GM10248 (cell line): ENCODE measurements at regions of chr1 and their contacts with region 1.

Region 1: DNA sequence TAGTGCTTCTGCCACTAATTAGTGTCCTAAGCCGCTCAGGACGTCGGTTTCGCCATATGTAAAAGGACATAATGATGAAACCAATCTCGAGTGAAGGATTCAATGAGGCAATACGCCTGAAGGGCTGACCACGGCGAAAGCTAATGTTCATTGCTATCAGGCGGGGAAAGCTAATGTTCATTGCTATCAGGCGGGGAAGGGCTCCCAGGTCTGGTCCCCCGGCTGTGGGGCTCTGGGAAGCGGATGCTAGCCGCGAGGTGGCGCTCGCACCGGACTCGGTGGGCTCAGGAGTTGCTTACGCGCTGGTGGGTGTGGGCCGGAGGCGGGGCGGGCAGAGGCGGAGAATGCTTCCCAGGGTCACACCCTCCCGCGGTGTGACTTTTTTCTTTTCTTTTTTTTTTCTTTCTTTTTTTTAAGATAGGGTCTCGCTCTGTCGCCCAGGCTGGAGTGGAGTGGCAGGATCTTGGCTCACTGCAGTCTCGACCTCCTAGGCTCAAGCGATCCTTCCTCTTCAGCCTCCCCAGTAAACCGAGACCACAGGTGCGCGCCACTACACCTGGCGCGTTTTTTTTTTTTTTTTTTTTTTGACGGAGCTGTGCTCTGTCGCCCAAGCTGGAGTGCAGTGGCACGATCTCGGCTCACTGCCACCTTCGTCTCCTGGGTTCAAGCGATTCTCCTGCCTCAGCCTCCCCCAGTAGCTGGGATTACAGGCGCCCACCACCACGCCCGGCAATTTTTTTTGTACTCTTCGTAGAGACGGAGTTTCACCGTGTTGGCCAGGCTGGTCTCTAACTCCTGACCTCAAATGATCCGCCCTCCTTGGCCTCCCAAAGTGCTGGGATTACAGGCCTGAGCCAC is 1.1 kb upstream of the PEAR1 start:
- DNase-seq: peak; percentile 89
- CTCF ChIP-seq: peak; percentile 80

Region 2: DNA sequence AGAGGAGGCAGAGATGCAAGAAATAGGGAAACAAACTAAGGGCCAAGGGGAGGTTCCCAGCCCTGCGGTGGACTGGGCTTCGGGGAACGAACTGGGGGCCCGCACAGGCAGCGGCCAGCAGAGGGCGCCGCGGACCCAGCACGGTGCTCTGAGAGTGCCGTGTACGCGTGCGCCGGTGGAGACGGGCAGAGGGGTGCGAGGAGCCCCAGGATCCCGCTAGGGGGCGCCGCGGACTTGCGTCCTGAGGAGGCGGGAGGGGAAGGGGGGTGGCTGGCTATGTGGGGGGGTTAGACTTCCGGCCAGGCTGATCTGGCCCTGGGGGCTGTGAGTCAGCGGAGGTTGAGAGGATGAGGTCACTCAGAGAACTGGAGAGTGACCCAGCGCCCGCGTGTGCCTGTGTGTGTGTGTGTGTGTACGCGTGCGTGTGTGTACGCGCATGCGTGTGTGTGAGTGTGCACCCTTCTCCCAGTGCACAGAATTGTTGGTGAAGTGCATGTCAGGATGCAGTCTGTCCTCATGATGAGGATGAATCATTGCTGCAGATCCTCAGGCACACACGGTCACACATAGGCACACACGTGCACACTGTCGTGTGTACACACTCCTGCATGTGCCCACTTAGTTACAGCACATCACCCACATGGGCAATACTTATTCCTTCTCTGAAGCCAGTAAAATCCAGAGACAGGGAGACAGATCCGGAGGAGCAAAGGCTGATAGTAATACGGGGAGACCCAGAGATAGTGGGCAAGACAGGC is 232.2 kb before region 1 on chr1:
- CTCF ChIA-PET with region 1: interaction called, 33 read pairs
- POLR2A ChIA-PET with region 1: no interaction called
- DNase-seq: peak; percentile 99
- CTCF ChIP-seq: peak; percentile 99

Region 3: GRCh38 chr1:156705918-156706656 is 186.3 kb before region 1 on chr1:
- CTCF ChIA-PET with region 1: interaction called, 15 read pairs
- POLR2A ChIA-PET with region 1: no interaction called
- DNase-seq: peak; percentile 88
- CTCF ChIP-seq: peak; percentile 67

Region 4: DNA sequence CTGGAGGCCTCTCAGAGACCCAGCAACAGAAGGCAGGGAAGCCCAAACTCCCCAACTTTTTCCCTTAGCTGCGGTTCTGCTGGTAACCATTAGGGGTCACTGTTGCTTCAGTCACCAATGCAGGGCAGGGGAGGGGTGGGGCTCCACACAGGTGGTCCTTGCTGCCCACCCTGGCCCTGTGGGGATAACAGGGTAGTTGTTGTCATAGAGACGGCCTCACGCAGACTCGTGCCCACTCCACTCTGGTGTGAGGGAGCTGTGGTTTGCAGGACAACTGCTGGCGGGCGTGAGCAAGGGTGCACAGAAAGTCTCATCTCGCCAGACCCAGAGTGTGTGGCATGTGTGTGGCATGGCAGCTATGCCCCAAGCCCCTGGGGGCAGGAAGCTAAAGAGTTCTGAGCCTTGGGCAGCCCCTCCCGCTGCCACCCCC is 53.4 kb before region 1 on chr1:
- CTCF ChIA-PET with region 1: interaction called, 52 read pairs
- POLR2A ChIA-PET with region 1: no interaction called
- DNase-seq: peak; percentile 75
- CTCF ChIP-seq: peak; percentile 86

Region 5: DNA sequence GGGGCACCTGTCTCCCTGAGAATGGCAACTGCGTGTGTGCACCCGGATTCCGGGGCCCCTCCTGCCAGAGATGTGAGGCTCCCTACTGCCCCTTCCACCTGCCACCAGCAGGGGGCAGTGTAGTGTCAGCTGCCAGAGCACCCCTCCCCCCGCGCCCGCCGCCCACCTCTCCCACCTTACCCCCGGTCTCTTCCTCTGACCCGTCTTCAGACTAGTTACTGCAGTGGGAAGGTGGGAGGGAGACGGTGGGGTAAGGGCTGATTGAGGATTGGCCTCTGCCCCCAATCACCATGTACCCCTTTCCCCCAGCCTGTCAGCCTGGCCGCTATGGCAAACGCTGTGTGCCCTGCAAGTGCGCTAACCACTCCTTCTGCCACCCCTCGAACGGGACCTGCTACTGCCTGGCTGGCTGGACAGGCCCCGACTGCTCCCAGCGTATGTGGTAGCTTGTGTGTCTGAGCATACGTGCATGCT is 17.9 kb after region 1 on chr1:
- CTCF ChIA-PET with region 1: interaction called, 33 read pairs
- POLR2A ChIA-PET with region 1: no interaction called
- DNase-seq: peak; percentile 83
- CTCF ChIP-seq: peak; percentile 82

Region 6: DNA sequence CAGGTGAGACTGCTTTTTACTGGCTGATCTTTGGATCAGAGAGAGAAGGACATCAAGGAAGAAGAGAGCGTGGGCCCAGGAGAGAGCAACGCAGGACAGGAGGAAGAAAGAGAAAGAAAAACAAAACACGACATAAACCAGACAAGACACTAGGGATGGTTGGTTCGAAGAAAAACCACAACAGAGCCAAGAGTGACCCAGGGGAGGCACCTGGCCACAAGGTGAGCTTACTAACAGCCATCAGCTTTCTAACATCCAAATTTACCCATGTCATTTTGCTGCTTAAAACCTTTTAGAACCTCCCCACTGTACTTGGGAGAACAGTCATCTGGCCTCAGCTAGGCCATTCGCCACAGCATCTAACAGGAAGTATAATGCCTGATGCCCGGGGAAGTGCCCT is 95.3 kb after region 1 on chr1:
- CTCF ChIA-PET with region 1: no interaction called
- POLR2A ChIA-PET with region 1: no interaction called
- DNase-seq: no peak
- CTCF ChIP-seq: no peak

Region 7: GRCh38 chr1:157073944-157074767 is 181.7 kb after region 1 on chr1:
- CTCF ChIA-PET with region 1: interaction called, 14 read pairs
- POLR2A ChIA-PET with region 1: no interaction called
- DNase-seq: peak; percentile 66
- CTCF ChIP-seq: peak; percentile 54